Sigmoid colon (tissue), 7 donors: ENCODE measurements at regions of chr10 and their contacts with region 1.

Region 1: GRCh38 chr10:112183329-112184051 is at the start of gene GPAM:
- DNase-seq: peak; percentile 96
- H3K4me3 ChIP-seq: peak within 1 kb of the TSS; percentile 59 to 83 (median 78)
- H3K27ac ChIP-seq: peak within 1 kb of the TSS; percentile 67 to 81 (median 78)
- H3K4me1 ChIP-seq: peaks cover 0 to 16% (median 10%) of the 10 kb centered on the region in 4 donors
- H3K27me3 ChIP-seq: no peaks in the 10 kb centered on the region
- CTCF ChIP-seq: no peak
- EP300 ChIP-seq: peak in 1 of 4 donors; percentile 56
- POLR2A ChIP-seq: peak; percentile 39 to 62
- total RNA-seq, gene GPAM: 4.8 to 61.4 (median 6.1) TPM

Region 2: DNA sequence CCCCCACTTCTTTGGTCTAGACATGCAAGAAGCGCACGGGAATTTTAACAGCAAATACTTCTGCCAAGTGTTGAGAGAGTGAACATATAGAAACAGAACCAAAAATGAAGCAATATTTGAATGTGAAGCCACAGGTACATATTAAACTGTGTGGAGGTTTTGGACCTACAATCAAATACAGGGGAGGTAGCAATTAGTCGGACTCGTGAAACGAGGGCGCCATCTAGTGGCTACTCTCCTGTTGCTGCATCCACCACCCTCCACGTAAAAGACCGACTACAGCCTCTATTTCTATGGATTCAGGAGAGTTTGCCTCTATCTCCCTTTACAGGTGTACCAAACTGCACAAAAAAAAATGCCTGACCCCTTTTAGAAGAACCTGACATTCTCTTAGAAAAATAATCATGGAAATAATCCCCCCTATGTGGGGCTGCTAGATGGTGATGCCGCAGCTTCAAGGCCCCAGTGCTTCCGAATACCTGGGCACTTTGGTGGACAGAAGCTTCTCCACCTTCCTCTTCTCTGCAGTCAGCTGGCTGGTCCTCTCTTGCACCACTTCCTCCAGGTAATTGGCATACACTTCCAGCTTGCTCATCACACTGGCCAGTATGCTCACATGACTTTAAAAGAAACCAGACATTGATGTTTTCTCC is 131.5 kb after region 1 on chr10:
- intact Hi-C with region 1: loop called (anchors 2 kb)
- DNase-seq: peak; percentile 81
- H3K4me3 ChIP-seq: no peak overlapping the region
- H3K27ac ChIP-seq: no peak overlapping the region
- H3K4me1 ChIP-seq: no peaks in the 10 kb centered on the region
- H3K27me3 ChIP-seq: peaks cover 0 to 9% (median 0%) of the 10 kb centered on the region in 3 donors
- CTCF ChIP-seq: peak in 3 of 4 experiments; percentile 62 to 90 (median 68)
- EP300 ChIP-seq: no peak
- POLR2A ChIP-seq: no peak

Region 3: DNA sequence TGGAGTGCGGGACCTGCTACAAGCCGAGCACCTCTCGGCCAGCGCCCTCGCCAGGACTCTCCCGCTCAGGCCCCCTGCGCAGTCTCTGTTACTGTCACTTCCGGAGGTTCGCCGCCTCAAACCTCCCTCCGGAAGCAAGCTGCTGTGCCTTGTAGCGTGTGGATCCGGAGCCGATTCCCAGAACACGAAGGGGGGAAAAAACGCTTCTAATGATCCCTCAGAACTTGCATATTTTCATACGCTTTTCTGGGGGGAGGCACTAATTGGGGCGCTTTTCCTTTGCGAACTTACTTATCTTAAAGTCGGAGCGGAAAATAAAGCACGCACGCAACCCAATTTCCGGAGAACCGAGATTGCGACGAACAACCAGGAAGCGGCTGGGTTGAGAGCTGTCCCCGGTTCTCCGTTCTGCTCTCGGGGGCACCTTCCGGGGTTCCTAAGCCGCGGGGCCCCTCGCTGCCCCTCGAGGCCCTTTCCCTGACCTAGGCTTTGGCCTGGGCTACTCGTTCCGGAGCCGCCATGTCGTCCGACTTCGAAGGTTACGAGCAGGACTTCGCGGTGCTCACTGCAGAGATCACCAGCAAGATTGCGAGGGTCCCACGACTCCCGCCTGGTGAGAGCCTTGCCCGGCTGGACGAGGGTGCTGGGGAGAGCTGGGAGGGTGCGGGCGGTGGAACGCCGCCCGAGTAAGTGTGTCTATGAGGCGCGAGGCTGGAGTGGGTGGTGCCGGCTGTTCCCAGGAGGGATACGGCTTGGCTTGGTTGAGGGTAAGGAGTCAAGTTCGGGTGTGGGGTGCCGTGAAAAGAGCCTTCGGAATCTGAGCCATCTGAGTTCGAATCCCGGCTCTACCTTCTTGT is 263.6 kb after region 1 on chr10 and contains the starts of genes VTI1A and ZDHHC6:
- intact Hi-C with region 1: loop called (anchors 5 kb)
- DNase-seq: peak; percentile 90
- H3K4me3 ChIP-seq: peak within 1 kb of the TSS; percentile 66 to 91 (median 79)
- H3K27ac ChIP-seq: peak within 1 kb of the TSS; percentile 86 to 92 (median 89)
- H3K4me1 ChIP-seq: peaks cover 0 to 28% (median 25%) of the 10 kb centered on the region in 4 donors
- H3K27me3 ChIP-seq: no peaks in the 10 kb centered on the region
- CTCF ChIP-seq: no peak
- EP300 ChIP-seq: no peak
- POLR2A ChIP-seq: peak; percentile 0 to 3
- total RNA-seq, gene VTI1A: 36.8 to 80.3 (median 41.7) TPM
- total RNA-seq, gene ZDHHC6: 16.7 to 32.1 (median 23.3) TPM